Activated CD8-positive, alpha-beta T cell treated with anti-CD3 and anti-CD28 coated beads for 36 hours (primary cell): ENCODE measurements at regions of chr6 and their contacts with region 1.

Region 1: GRCh38 chr6:11711003-11711983 is 67.3 kb downstream of the ADTRP start:
- DNase-seq: peak; percentile 84
- ATAC-seq: peak; percentile 50
- H3K4me3 Mint-ChIP-seq: peak overlapping the region; percentile 57
- H3K27ac Mint-ChIP-seq: peak overlapping the region; percentile 97
- H3K4me1 Mint-ChIP-seq: peaks cover 70% of the 10 kb centered on the region
- H3K27me3 Mint-ChIP-seq: no peaks in the 10 kb centered on the region
- CTCF ChIP-seq: no peak

Region 2: DNA sequence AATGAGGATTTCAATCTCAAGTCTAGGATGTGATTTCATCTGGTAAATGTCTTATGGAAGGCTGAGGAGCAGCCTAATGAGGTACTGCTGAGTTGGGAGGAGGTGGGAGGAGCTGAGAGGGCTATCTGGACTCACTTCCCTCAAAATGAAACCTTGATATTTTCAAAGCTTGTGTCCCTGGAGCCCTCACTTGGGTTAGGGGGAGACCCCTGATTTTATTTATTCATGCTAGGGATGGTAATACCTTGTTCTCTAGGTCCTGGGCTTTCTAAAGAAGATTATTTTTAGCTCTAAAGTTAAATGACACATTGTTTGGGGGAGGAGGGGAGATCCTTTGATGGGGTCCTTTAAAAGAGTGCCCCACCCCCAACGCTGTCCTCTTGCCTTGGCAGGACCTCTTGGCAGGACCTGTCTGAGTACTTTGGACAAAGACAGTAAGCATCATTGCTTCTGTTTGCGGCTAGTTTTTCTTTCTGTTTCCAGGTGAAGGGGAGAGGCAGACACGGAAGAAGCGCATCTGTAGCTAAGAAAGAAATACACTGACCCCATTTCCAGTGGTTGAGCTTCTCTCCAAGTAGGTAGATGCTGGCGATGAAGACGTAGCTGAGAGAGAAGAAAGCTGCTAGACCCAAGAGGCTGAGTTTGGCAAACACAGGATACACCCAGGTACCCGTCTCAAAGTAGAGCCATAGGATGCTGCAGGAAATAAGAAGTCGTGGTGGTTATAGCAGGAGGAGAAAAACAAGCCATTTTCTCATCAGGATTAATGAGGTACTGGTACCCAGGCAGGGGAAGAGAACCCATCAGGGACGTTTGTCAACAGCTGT is 11.7 kb after region 1 on chr6:
- CTCF ChIA-PET with region 1: interaction called, 13 read pairs
- POLR2A ChIA-PET with region 1: interaction called, 122 read pairs
- intact Hi-C with region 1: loop called (anchors 2 kb)
- DNase-seq: no peak
- ATAC-seq: peak; percentile 66
- H3K4me3 Mint-ChIP-seq: peak overlapping the region; percentile 56
- H3K27ac Mint-ChIP-seq: peak overlapping the region; percentile 80
- H3K4me1 Mint-ChIP-seq: peaks cover 55% of the 10 kb centered on the region
- H3K27me3 Mint-ChIP-seq: no peaks in the 10 kb centered on the region
- CTCF ChIP-seq: no peak

Region 3: GRCh38 chr6:11732036-11732631 is 20.8 kb after region 1 on chr6:
- CTCF ChIA-PET with region 1: interaction called, 18 read pairs
- POLR2A ChIA-PET with region 1: interaction called, 122 read pairs
- intact Hi-C with region 1: loop called (anchors 2 kb)
- DNase-seq: peak; percentile 87
- ATAC-seq: peak; percentile 49
- H3K4me3 Mint-ChIP-seq: peak overlapping the region; percentile 5
- H3K27ac Mint-ChIP-seq: peak overlapping the region; percentile 94
- H3K4me1 Mint-ChIP-seq: peaks cover 62% of the 10 kb centered on the region
- H3K27me3 Mint-ChIP-seq: no peaks in the 10 kb centered on the region
- CTCF ChIP-seq: no peak

Region 4: GRCh38 chr6:11929241-11929850 is 218.1 kb after region 1 on chr6:
- CTCF ChIA-PET with region 1: no interaction called
- POLR2A ChIA-PET with region 1: no interaction called
- intact Hi-C with region 1: no loop called
- DNase-seq: no peak
- ATAC-seq: no peak
- H3K4me3 Mint-ChIP-seq: no peak overlapping the region
- H3K27ac Mint-ChIP-seq: no peak overlapping the region
- H3K4me1 Mint-ChIP-seq: no peaks in the 10 kb centered on the region
- H3K27me3 Mint-ChIP-seq: no peaks in the 10 kb centered on the region
- CTCF ChIP-seq: no peak

Region 5: DNA sequence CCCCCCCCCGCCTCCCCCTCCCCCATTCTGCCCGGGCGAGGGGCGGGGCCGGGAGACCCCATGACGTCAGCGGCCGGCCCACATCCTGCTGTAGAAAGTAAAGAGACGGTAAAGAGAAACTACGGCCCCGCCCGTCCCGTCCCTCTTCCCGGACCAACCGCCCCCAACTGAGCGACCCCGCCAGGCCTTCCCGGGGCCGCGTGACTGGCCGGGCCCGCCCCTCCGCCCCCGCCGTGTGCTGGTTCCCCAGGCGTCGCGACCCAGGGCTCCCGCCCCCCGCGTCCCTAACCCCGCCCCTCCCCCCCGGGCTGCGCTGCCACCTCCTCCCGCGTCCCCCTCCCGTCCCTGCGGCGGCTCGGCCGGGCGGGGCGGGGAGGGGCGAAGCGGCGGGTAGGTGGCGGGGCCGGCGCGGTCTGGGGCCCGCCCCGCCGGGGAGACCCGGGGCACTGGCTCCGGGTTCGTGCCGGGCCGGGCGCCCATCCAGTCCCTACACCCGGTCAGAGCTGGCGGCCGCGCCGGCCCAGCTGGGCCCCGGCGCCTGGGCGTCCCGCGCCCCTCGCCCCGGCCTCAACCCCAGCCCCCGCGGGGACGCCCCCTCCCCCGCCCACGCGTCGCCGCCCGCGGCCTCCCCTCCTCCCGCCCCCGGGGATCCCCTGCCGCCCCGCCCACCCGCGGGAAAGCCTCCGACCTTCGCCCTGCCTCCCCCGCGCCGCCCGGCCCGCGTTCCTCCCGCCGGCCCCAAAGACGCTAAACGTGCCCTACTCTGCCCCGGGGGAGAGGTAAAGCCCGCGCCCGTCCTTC is 300.2 kb after region 1 on chr6:
- CTCF ChIA-PET with region 1: no interaction called
- POLR2A ChIA-PET with region 1: interaction called, 28 read pairs
- intact Hi-C with region 1: loop called (anchors 5 kb)
- DNase-seq: peak; percentile 99
- ATAC-seq: peak; percentile 79
- H3K4me3 Mint-ChIP-seq: peak overlapping the region; percentile 98
- H3K27ac Mint-ChIP-seq: peak overlapping the region; percentile 96
- H3K4me1 Mint-ChIP-seq: peaks cover 41% of the 10 kb centered on the region
- H3K27me3 Mint-ChIP-seq: no peaks in the 10 kb centered on the region
- CTCF ChIP-seq: no peak

Region 6: GRCh38 chr6:12051861-12052368 is 340.6 kb after region 1 on chr6:
- CTCF ChIA-PET with region 1: no interaction called
- POLR2A ChIA-PET with region 1: no interaction called
- intact Hi-C with region 1: loop called (anchors 5 kb)
- DNase-seq: peak; percentile 85
- ATAC-seq: peak; percentile 87
- H3K4me3 Mint-ChIP-seq: peak overlapping the region; percentile 66
- H3K27ac Mint-ChIP-seq: peak overlapping the region; percentile 90
- H3K4me1 Mint-ChIP-seq: peaks cover 74% of the 10 kb centered on the region
- H3K27me3 Mint-ChIP-seq: no peaks in the 10 kb centered on the region
- CTCF ChIP-seq: no peak